Activated CD8-positive, alpha-beta T cell treated with anti-CD3 and anti-CD28 coated beads, Interleukin-2, amount 10 ng/mL, durations not matched to agents 7 days and 5 days (primary cell): ENCODE measurements at regions of chr9 and their contacts with region 1.

Region 1: GRCh38 chr9:113275157-113276131 is at the starts of genes CDC26 and PRPF4:
- DNase-seq: peak; percentile 98
- ATAC-seq: peak; percentile 95
- H3K4me3 Mint-ChIP-seq: no peak within 1 kb of the TSS
- H3K27ac Mint-ChIP-seq: no peak within 1 kb of the TSS
- H3K4me1 Mint-ChIP-seq: peaks cover 21% of the 10 kb centered on the region
- H3K27me3 Mint-ChIP-seq: no peaks in the 10 kb centered on the region
- total RNA-seq, gene CDC26: 26.1 to 28.9 TPM
- total RNA-seq, gene PRPF4: 33.3 to 37.3 TPM

Region 2: DNA sequence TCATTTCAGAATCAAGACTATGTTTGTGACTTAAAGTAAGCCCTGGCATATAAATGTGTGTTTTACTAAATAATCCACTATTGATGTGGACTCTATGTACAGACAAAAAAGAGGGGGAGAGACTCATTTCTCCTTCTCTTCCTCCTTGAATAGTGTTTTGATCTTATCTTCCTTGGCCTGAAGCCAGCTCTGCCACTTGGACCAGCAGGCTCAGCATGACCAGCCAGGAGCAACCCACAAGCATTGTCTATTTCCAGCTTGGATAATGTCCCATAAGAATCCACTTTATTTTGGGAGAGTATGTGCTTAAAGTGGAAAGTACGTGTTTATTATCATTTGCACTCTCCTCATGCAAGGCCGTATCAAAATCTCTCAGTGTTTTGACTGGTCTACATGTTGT is 360.9 kb before region 1 on chr9:
- CTCF ChIA-PET with region 1: no interaction called
- POLR2A ChIA-PET with region 1: no interaction called
- DNase-seq: no peak
- ATAC-seq: no peak
- H3K4me3 Mint-ChIP-seq: no peak overlapping the region
- H3K27ac Mint-ChIP-seq: no peak overlapping the region
- H3K4me1 Mint-ChIP-seq: no peaks in the 10 kb centered on the region
- H3K27me3 Mint-ChIP-seq: peaks cover 10% of the 10 kb centered on the region

Region 3: DNA sequence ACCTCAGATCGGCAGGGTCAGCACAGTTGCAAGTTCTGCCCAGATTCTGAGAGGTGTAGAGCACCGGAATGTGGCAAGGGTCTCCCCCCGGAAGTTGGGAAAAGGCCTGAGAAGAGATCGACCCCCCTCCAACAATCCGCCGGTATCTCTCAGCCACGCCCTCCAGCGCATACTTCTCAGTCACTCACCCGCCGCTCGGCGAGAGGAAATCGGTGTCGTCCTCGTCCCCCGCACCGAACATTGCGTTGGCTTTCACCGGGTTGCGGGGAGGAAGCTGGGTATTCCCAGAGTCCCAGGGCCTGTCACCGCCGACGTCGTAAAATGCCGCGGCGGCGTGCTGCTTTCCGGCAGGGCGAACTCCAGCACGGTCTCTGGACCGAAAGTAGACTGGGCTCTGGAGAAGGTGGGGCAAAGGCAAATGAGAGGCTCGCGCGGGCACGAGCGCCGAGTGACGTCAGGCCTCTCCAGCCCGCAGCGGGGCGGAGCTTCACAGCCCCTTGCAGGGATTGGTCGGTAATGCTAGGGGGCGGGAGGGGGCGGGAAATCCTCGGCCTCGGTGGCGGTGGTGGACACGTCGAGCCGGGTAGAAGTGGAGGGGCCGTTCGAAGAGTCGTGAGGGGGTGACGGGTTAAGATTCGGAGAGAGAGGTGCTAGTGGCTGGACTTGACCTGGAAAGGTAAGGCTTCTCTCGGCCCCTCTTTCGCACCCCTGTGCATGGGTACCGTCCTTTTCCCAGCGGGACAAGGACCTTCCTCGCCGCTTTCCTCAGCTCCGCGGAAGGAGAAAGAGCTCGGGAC is 54.2 kb before region 1 on chr9 and contains the starts of genes FKBP15 and SLC31A1:
- CTCF ChIA-PET with region 1: interaction called, 41 read pairs
- POLR2A ChIA-PET with region 1: interaction called, 10 read pairs
- DNase-seq: peak; percentile 97
- ATAC-seq: peak; percentile 96
- H3K4me3 Mint-ChIP-seq: peak within 1 kb of the TSS; percentile 88
- H3K27ac Mint-ChIP-seq: peak within 1 kb of the TSS; percentile 94
- H3K4me1 Mint-ChIP-seq: peaks cover 37% of the 10 kb centered on the region
- H3K27me3 Mint-ChIP-seq: no peaks in the 10 kb centered on the region
- total RNA-seq, gene FKBP15: 34.5 to 36.3 TPM
- total RNA-seq, gene SLC31A1: 9.5 to 10.2 TPM

Region 4: GRCh38 chr9:113261917-113262671 is 13.3 kb before region 1 on chr9:
- CTCF ChIA-PET with region 1: interaction called, 13 read pairs
- POLR2A ChIA-PET with region 1: no interaction called
- DNase-seq: no peak
- ATAC-seq: no peak
- H3K4me3 Mint-ChIP-seq: no peak overlapping the region
- H3K27ac Mint-ChIP-seq: no peak overlapping the region
- H3K4me1 Mint-ChIP-seq: peaks cover 2% of the 10 kb centered on the region
- H3K27me3 Mint-ChIP-seq: no peaks in the 10 kb centered on the region

Region 5: DNA sequence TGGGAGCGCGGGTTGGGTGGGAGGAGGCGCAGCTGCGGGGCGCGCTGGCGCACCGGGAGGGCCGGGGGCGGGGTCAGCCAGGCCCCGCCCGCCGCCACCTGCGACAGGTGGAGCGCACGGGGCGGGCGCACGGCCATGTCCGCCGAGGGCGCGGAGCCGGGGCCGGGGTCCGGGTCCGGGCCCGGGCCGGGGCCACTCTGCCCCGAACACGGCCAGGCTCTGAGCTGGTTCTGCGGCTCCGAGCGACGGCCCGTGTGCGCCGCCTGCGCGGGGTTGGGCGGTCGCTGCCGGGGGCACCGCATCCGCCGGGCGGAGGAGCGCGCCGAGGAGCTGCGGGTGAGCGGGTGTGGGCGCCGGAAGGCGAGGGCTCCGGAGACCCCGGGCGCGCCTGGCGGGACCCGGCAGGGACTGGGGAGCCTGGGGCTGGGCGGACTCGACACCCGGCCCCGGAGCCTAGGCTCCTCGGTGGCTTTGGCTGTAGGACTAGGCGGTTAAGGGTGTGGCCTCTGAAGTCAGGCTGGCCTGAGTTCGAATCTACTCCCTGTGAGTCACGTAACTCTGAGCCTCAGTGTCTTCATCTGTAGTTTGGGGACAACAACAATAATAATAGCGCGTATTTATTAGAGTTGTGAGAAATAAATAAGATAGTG is 74.1 kb after region 1 on chr9 and contains the start of gene BSPRY:
- CTCF ChIA-PET with region 1: interaction called, 14 read pairs
- POLR2A ChIA-PET with region 1: interaction called, 7 read pairs
- DNase-seq: peak; percentile 58
- ATAC-seq: peak; percentile 71
- H3K4me3 Mint-ChIP-seq: peak within 1 kb of the TSS; percentile 78
- H3K27ac Mint-ChIP-seq: peak within 1 kb of the TSS; percentile 63
- H3K4me1 Mint-ChIP-seq: peaks cover 30% of the 10 kb centered on the region
- H3K27me3 Mint-ChIP-seq: no peaks in the 10 kb centered on the region
- total RNA-seq, gene BSPRY: 4.0 to 4.4 TPM

Region 6: DNA sequence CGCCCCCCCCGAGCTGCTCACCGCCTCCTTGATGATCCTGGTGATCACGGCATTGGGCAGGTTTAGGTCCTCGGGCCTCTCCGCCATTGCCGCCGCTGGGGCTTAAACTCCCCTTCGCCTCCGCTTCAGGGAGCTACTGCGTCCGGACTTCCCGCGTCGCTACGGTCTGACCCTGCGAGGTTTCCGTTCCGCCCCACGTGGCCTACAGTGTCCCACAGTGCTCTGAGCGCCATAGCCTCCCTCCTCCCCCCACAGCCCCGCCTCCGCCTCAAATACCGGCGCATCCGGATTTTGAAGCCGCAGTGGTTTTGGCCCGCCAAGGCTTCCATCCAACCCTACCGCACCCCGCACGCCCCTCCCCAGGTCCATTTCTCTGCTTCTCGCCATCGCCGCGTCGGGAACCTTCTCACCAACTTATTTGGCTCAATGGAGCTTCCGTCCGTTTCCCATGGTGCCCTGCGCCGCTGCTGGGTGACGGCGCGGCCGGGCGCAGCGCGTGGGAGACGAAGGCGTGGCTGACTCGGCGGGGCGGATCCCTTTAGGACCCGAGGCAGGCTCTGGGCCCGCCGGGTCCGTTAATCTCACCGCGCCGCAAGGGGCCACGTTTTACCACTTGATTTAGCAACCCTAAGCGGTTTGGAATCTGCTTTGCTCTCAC is 134.9 kb after region 1 on chr9 and contains the starts of genes C9orf43 and POLE3:
- CTCF ChIA-PET with region 1: interaction called, 105 read pairs
- POLR2A ChIA-PET with region 1: interaction called, 25 read pairs
- DNase-seq: peak; percentile 96
- ATAC-seq: peak; percentile 95
- H3K4me3 Mint-ChIP-seq: peak within 1 kb of the TSS; percentile 88
- H3K27ac Mint-ChIP-seq: peak within 1 kb of the TSS; percentile 100
- H3K4me1 Mint-ChIP-seq: peaks cover 35% of the 10 kb centered on the region
- H3K27me3 Mint-ChIP-seq: no peaks in the 10 kb centered on the region
- total RNA-seq, gene C9orf43: 0.34 to 0.60 TPM
- total RNA-seq, gene POLE3: 78.9 to 81.7 TPM

Region 7: GRCh38 chr9:113578882-113579282 is 303.4 kb after region 1 on chr9:
- CTCF ChIA-PET with region 1: interaction called, 20 read pairs
- POLR2A ChIA-PET with region 1: no interaction called
- DNase-seq: peak; percentile 94
- ATAC-seq: peak; percentile 75
- H3K4me3 Mint-ChIP-seq: peak overlapping the region; percentile 82
- H3K27ac Mint-ChIP-seq: peak overlapping the region; percentile 99
- H3K4me1 Mint-ChIP-seq: peaks cover 85% of the 10 kb centered on the region
- H3K27me3 Mint-ChIP-seq: no peaks in the 10 kb centered on the region